ENCODE measurements at regions of chr2 and their contacts with region 1.

Region 1: DNA sequence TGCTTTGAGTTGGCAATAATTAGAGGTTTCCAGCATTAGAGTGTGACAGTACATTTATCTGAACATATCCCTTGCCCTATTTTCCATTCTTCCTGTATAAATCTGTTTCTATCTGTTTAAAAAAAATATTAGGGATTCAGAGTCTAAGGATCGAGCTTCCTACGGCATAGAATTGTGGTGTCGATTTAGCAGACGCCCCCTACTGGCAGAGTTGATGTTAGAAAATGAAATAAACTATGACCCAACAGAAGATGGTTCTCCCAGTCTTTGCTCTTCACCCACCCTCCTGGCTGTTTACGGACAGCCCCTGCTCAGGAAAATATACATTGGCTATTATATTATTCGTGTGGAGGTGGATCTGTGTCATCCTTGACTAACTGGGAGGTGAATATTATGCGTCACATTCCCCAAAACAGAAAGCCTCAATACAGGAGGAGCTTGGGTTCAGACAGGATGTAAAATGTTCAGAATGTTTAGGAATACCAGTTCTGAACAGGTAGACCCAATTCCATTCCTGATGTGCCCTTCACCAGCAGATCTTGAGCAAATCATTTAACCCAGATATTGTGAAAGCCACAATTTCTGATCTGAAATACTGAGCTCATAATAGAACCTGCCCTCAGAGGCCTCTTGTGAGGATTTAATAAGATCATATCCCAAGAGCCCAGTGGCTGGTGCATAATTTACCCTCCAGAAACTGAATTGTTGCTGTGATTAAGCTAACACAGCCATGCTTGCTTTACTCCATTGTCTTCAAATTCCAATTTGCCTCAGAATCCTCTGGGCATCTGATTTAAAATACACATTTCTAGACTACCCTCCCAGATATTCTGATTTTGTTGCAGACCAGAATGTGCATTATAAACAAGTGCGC is 10.8 kb upstream of the ERMN start:
- DNase-seq: peak; percentile 26
- H3K4me3 ChIP-seq: no peak overlapping the region
- H3K27ac ChIP-seq: no peak overlapping the region
- H3K4me1 ChIP-seq: no peaks in the 10 kb centered on the region
- H3K27me3 ChIP-seq: no peaks in the 10 kb centered on the region
- CTCF ChIP-seq: peak; percentile 75 to 84

Region 2: DNA sequence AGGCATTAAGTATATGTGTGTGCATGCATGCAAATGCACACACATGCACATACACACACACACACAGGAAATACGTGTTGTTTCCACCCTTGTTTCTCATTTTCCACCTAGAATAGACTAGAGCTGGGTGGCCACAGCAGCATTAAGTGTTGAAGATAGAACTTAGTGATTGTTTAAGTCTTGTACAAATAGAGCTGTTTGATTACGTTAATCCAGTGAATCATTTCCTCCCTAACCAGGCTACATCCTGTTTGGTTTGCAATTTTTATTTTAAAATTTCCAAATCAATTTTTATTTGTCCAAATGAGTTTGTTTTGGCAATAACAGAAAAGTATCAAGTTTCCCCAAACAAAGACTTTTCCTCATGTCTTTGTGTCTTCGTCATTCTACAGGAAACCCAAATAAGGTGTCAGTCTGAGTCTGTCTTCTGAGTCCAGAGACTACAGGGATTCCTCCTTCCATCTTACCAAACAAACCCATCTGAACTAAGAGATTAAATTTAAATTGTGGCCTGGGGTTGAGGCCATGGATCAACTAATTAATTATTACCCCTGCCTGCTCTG is 153.5 kb before region 1 on chr2:
- CTCF ChIA-PET with region 1: no interaction called
- dilution Hi-C with region 1: no loop called
- in situ Hi-C with region 1: no loop called
- intact Hi-C with region 1: no loop called
- DNase-seq: peak; percentile 87
- H3K4me3 ChIP-seq: no peak overlapping the region
- H3K27ac ChIP-seq: peak overlapping the region; percentile 38
- H3K4me1 ChIP-seq: peaks cover 12% of the 10 kb centered on the region
- H3K27me3 ChIP-seq: no peaks in the 10 kb centered on the region
- CTCF ChIP-seq: no peak

Region 3: GRCh38 chr2:157302492-157303099 is 33.8 kb before region 1 on chr2:
- CTCF ChIA-PET with region 1: no interaction called
- dilution Hi-C with region 1: no loop called
- in situ Hi-C with region 1: no loop called
- intact Hi-C with region 1: loop called (anchors 2 kb)
- DNase-seq: peak; percentile 32
- H3K4me3 ChIP-seq: no peak overlapping the region
- H3K27ac ChIP-seq: no peak overlapping the region
- H3K4me1 ChIP-seq: no peaks in the 10 kb centered on the region
- H3K27me3 ChIP-seq: no peaks in the 10 kb centered on the region
- CTCF ChIP-seq: peak; percentile 69 to 74

Measured in mammary epithelial cell (primary cell).